PC-3 (cell line): ENCODE measurements at regions of chr22 and their contacts with region 1.

Region 1: GRCh38 chr22:30802202-30803166 is 107.8 kb downstream of the OSBP2 start:
- DNase-seq: peak; percentile 91
- ATAC-seq: peak; percentile 80
- H3K4me3 ChIP-seq: peak overlapping the region; percentile 65
- H3K27ac ChIP-seq: peak overlapping the region; percentile 96
- H3K4me1 ChIP-seq: peaks cover 47% of the 10 kb centered on the region
- H3K27me3 ChIP-seq: no peaks in the 10 kb centered on the region
- CTCF ChIP-seq: no peak

Region 2: DNA sequence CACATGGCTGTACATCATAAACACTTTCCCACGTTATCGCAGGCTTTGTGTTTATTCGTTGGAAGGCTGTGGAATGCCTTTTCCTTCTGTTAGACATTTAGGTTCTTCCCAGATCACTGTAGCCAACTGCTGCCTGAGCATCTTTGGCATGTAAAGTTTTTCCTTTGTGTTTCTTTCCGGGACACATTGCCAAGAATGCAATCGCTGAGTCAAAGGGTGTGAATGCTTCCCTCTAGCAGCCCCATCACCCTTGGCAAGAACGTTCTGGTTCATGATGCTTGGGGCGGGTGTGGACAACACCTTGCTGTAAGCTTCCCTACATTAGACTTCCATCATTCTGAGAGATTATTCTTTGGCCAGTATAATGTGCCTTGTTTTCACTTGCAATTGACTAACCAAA is 28.4 kb after region 1 on chr22:
- CTCF ChIA-PET with region 1: no interaction called
- POLR2A ChIA-PET with region 1: interaction called, 4 read pairs
- intact Hi-C with region 1: loop called (anchors 2 kb)
- DNase-seq: peak; percentile 95
- ATAC-seq: peak; percentile 53
- H3K4me3 ChIP-seq: no peak overlapping the region; the same call in 1 of the 2 replicates
- H3K27ac ChIP-seq: peak overlapping the region; percentile 100
- H3K4me1 ChIP-seq: peaks cover 29% of the 10 kb centered on the region
- H3K27me3 ChIP-seq: no peaks in the 10 kb centered on the region
- CTCF ChIP-seq: no peak